ENCODE measurements at regions of chrX and their contacts with region 1.

Region 1: DNA sequence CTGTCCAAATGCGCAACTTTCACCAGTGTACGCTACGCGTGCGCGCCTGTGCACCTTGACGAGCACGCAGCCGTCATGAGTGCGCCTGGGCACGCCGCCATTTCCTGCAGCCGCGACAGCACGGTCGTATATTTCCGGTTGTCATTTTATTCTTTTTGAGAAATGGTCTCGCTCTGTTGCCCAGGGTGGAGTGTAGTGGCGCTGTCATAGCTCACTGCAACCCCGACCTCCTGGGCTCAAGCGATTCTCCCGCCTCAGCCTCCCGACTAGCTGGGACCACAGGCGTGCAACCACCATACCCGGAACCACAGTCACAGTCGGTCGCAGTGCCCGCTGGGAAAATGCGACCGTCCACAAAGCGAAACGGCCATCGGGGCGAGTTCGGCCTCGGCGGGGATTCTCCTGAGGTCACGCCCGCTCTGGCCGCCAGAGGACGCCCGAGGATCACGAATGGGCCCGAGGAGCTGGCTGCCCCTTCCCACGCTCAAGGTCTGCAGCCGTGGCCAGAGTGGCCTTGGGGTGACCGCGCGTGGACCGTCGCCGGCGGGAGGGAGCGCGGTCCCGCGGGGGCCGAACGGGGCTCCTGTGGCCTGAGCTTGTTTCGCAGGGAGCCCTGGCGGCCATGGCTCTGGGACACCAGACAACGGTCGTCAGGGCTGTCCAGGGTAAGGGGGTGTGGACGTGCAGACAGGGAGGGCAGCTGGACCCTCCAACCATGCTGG is 23.7 kb upstream of the PNMA3 start:
- DNase-seq: no peak
- H3K4me3 ChIP-seq: peak overlapping the region; percentile 36
- CTCF ChIP-seq: peak; percentile 81

Region 2: GRCh38 chrX:153019166-153019565 is 13.4 kb before region 1 on chrX:
- CTCF ChIA-PET with region 1: interaction called, 11 read pairs
- POLR2A ChIA-PET with region 1: no interaction called
- DNase-seq: no peak
- H3K4me3 ChIP-seq: no peak overlapping the region
- CTCF ChIP-seq: no peak

Region 3: GRCh38 chrX:153200462-153200861 is 167.9 kb after region 1 on chrX:
- CTCF ChIA-PET with region 1: no interaction called
- POLR2A ChIA-PET with region 1: no interaction called
- DNase-seq: no peak
- H3K4me3 ChIP-seq: no peak overlapping the region
- CTCF ChIP-seq: no peak

Region 4: DNA sequence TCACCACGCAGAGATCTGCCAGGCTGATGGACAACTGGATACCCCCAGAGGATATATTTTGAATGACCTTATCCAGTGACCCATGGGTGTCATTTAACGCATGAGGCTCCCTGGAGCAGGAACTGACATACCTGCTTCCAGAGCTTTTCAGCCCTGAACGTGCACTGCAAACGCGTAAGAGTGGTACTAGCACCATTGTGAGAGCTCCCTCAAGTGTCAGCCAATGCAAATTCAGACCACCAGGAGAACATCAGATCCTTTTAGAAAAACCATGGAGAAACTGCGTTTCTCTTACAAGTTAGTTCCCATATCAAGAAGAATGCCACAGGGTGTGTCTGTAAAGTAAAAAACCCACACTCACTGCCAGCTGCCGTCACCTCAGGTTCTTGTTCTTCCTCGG is 406.0 kb after region 1 on chrX:
- CTCF ChIA-PET with region 1: interaction called, 15 read pairs
- POLR2A ChIA-PET with region 1: no interaction called
- DNase-seq: no peak
- H3K4me3 ChIP-seq: no peak overlapping the region
- CTCF ChIP-seq: peak; percentile 31

Measured in AG04449 (cell line).